ENCODE measurements at regions of chr19 and their contacts with region 1.

Region 1: GRCh38 chr19:17390665-17391370 is 3.2 kb downstream of the CCDC194 start:
- DNase-seq: peak; percentile 93
- H3K4me3 Mint-ChIP-seq: peak overlapping the region; percentile 82
- H3K27ac Mint-ChIP-seq: no peak overlapping the region
- H3K4me1 Mint-ChIP-seq: peaks cover 20% of the 10 kb centered on the region
- H3K27me3 Mint-ChIP-seq: no peaks in the 10 kb centered on the region

Region 2: DNA sequence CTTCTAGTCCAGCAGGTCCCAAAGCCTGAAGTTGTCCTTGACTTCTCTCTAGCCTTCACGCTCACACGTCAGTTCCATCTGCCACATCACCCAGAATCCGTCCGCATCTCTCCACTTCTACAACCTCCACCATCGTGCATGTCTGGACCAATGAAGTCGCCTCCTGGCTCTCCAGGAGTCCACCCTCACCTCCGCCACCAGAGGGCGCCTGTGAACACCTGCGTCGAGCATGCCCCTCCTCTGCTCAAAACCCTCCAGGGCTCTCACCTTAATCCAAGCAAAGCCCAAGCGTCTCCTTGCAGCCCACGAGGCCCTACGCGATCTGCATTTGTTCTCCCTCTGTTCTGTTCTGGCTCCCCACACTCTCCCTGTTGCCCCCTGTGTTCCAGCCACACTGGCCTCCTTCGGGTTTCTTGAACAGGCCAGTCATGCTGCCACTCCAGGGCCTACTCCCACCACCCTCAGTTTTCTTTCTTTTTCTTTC is 129.9 kb before region 1 on chr19:
- CTCF ChIA-PET with region 1: interaction called, 20 read pairs
- intact Hi-C with region 1: no loop called
- DNase-seq: peak; percentile 95
- H3K4me3 Mint-ChIP-seq: no peak overlapping the region
- H3K27ac Mint-ChIP-seq: no peak overlapping the region
- H3K4me1 Mint-ChIP-seq: peaks cover 10% of the 10 kb centered on the region
- H3K27me3 Mint-ChIP-seq: no peaks in the 10 kb centered on the region

Region 3: GRCh38 chr19:17336872-17337722 is 53.7 kb before region 1 on chr19 and contains the start of gene GTPBP3:
- CTCF ChIA-PET with region 1: interaction called, 17 read pairs
- intact Hi-C with region 1: loop called (anchors 2 kb)
- DNase-seq: peak; percentile 98
- H3K4me3 Mint-ChIP-seq: peak within 1 kb of the TSS; percentile 88
- H3K27ac Mint-ChIP-seq: peak within 1 kb of the TSS; percentile 93
- H3K4me1 Mint-ChIP-seq: peaks cover 28% of the 10 kb centered on the region
- H3K27me3 Mint-ChIP-seq: no peaks in the 10 kb centered on the region
- total RNA-seq, gene GTPBP3: 36.8 to 45.7 TPM

Region 4: DNA sequence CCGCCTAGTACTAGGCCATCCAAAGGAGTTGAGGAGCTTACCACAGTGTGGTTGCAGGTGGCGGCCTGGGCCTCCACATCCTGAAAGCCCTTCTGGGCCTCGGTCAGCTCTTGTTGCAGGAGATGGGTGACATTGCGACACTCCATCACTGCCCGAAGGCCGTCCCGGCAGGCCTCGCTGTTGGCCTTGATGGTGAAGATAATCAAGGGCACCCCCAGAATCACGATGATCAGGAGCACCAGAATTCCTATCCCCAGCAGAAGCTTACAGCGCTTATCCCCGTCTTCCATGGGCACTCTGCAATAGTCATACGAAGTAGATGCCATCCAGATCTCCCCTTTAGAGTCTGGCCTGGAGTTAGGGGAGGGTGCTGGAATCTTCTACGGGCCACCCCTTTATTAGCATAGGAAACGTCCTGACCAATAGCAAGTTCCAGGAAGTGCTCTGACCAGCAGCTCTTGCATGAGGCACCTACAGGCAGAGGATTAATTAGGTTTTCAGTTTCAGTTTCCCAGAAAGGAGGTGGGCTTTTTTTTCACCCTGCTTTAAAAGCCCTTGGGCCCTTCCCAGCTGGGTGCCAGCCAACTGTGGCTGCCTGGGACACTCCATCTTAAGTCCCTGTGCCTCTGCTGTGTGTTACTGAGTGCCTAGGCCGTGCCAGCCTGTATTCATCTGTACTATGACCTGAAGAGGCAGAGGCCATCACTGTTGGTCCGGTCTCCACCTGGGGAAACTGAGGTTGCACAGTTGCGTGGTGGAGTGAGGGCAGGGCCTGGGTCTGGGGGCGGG is 14.6 kb after region 1 on chr19 and contains the start of gene BST2:
- CTCF ChIA-PET with region 1: interaction called, 5 read pairs
- intact Hi-C with region 1: loop called (anchors 1 kb)
- DNase-seq: peak; percentile 69
- H3K4me3 Mint-ChIP-seq: peak within 1 kb of the TSS; percentile 80
- H3K27ac Mint-ChIP-seq: peak within 1 kb of the TSS; percentile 94
- H3K4me1 Mint-ChIP-seq: peaks cover 33% of the 10 kb centered on the region
- H3K27me3 Mint-ChIP-seq: no peaks in the 10 kb centered on the region
- total RNA-seq, gene BST2: 117 to 121 TPM

Region 5: DNA sequence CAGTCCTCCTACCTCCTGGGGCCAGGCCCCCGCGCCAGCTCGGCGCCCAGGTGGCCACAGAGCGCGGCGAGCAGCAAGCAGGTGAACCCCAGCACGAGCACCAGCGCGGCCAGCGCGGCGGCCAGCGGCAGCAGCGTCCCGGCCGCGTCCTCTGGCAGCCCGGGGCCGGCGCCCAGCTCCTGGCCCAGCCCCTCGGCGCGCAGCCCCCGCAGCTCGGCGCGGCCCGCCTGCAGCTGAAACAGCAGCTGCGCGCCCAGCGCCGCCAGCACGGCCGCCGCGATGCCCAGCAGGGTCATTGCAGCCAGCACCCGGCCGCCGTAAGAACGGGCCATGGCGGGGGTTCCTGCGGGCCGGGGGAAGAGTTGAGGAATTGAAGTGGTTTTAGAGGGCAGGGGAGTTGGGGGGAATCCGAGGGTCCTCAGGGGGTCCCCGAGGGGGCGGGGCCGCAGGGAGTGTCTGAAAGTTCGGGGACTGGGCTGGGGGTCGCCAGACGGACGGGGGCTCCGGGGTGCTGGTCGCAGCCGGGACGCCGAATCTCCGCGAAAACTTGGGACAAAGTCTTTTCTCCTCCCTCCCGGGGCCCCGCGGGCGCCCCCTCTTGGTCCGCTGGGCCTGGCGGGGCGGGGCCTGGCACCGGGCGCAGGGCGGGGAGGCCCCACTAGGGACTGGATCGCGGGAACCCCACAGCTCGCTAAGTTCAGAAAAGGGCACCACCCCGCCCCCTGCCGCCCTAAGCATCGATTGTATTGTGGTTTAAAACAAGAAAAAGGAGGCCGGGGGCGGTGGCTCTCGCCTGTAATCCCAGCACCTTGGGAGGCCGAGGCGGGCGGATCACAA is 57.5 kb after region 1 on chr19 and contains the start of gene TMEM221:
- CTCF ChIA-PET with region 1: no interaction called
- intact Hi-C with region 1: loop called (anchors 1 kb)
- DNase-seq: peak; percentile 80
- H3K4me3 Mint-ChIP-seq: peak within 1 kb of the TSS; percentile 27
- H3K27ac Mint-ChIP-seq: no peak within 1 kb of the TSS
- H3K4me1 Mint-ChIP-seq: peaks cover 14% of the 10 kb centered on the region
- H3K27me3 Mint-ChIP-seq: peaks cover 12% of the 10 kb centered on the region
- total RNA-seq, gene TMEM221: not detected

Region 6: GRCh38 chr19:17475541-17476115 is 84.8 kb after region 1 on chr19:
- CTCF ChIA-PET with region 1: no interaction called
- intact Hi-C with region 1: no loop called
- DNase-seq: no peak
- H3K4me3 Mint-ChIP-seq: no peak overlapping the region
- H3K27ac Mint-ChIP-seq: no peak overlapping the region
- H3K4me1 Mint-ChIP-seq: peaks cover 12% of the 10 kb centered on the region
- H3K27me3 Mint-ChIP-seq: no peaks in the 10 kb centered on the region

Measured in activated naive CD4-positive, alpha-beta T cell treated with anti-CD3 and anti-CD28 coated beads for 36 hours (primary cell).